ENCODE measurements at regions of chr19 and their contacts with region 1.

Region 1: GRCh38 chr19:18233224-18233825 is 7.1 kb upstream of the PDE4C start:
- DNase-seq: peak; percentile 43
- H3K4me3 ChIP-seq: no peak overlapping the region
- H3K27ac ChIP-seq: no peak overlapping the region
- H3K4me1 ChIP-seq: no peaks in the 10 kb centered on the region
- H3K27me3 ChIP-seq: no peaks in the 10 kb centered on the region
- CTCF ChIP-seq: no peak

Region 2: DNA sequence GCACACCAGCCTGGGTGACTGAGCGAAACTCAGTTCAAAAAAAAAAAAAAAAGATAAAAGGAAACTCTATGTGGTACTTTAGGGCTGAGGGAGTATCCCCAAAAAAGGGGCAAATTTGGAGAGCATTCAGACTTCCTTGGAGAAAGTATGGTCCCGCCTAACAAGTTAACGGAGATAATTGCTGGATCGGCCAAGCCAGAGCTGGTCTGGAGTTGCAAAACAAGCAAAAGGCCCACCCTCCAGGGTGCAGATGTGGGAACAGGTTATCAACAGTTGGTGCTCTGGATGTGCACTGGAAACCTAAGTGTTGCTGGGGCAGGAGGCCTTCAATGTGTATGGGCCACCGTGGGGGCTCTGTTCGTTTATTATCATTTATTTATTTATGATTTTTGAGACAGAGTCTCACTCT is 38.1 kb after region 1 on chr19:
- CTCF ChIA-PET with region 1: no interaction called
- dilution Hi-C with region 1: no loop called
- in situ Hi-C with region 1: no loop called
- intact Hi-C with region 1: no loop called
- DNase-seq: no peak
- H3K4me3 ChIP-seq: no peak overlapping the region
- H3K27ac ChIP-seq: no peak overlapping the region
- H3K4me1 ChIP-seq: peaks cover 20% of the 10 kb centered on the region
- H3K27me3 ChIP-seq: no peaks in the 10 kb centered on the region
- CTCF ChIP-seq: no peak

Region 3: GRCh38 chr19:18349524-18350128 is 116.3 kb after region 1 on chr19:
- CTCF ChIA-PET with region 1: no interaction called
- dilution Hi-C with region 1: no loop called
- in situ Hi-C with region 1: no loop called
- intact Hi-C with region 1: no loop called
- DNase-seq: peak; percentile 39
- H3K4me3 ChIP-seq: no peak overlapping the region
- H3K27ac ChIP-seq: no peak overlapping the region
- H3K4me1 ChIP-seq: peaks cover 10% of the 10 kb centered on the region
- H3K27me3 ChIP-seq: no peaks in the 10 kb centered on the region
- CTCF ChIP-seq: peak; percentile 93 to 95

Region 4: DNA sequence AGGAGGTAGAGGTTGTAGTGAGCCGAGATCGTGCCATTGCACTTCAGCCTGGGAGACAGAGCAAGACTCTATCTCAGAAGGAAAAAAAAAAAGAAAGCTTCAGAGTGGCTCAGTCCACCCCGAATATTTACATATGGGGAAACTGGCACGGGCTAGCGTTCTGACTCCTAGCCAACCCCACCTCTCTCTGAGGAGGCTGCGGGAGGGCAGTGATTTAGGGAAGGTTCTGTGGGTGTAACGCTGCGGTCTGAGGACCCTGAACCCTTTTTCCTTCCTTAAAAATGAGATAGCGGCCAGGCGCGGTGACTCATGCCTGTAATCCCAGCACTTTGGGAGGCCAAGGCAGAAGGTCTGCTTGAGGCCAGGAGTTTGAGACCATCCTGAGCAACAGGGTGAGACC is 159.1 kb after region 1 on chr19:
- CTCF ChIA-PET with region 1: no interaction called
- dilution Hi-C with region 1: loop called (anchors 5 kb)
- in situ Hi-C with region 1: no loop called
- intact Hi-C with region 1: no loop called
- DNase-seq: no peak
- H3K4me3 ChIP-seq: no peak overlapping the region
- H3K27ac ChIP-seq: no peak overlapping the region
- H3K4me1 ChIP-seq: peaks cover 7% of the 10 kb centered on the region
- H3K27me3 ChIP-seq: no peaks in the 10 kb centered on the region
- CTCF ChIP-seq: no peak